GM12878 (cell line): ENCODE measurements at regions of chr9 and their contacts with region 1.

Region 1: DNA sequence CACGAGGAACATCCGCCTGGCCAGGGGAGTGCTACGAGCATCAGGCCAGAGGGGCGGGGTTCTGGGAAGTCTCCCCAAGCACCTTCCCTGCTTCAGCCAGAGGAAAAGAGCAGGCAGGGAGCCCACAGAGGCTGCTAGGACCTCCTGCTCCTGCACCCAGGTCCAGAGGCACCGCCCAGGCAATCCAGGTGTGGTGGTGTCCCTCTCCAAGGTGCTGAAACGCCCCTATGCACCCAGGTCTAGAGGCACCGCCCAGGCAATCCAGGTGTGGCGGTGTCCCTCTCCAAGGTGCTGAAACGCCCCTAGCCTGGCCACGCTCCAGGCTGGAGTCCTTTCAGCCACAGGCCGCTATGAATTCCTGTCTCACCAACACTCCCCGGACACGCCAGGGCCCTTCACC is 10.7 kb upstream of the UBAC1 start:
- DNase-seq: no peak
- ATAC-seq: peak; percentile 62
- H3K4me3 ChIP-seq: no peak overlapping the region
- H3K27ac ChIP-seq: no peak overlapping the region
- H3K4me1 ChIP-seq: no peaks in the 10 kb centered on the region
- H3K27me3 ChIP-seq: no peaks in the 10 kb centered on the region
- CTCF ChIP-seq: no peak
- EP300 ChIP-seq: no peak
- POLR2A ChIP-seq: no peak
- RAD21 ChIP-seq: no peak

Region 2: DNA sequence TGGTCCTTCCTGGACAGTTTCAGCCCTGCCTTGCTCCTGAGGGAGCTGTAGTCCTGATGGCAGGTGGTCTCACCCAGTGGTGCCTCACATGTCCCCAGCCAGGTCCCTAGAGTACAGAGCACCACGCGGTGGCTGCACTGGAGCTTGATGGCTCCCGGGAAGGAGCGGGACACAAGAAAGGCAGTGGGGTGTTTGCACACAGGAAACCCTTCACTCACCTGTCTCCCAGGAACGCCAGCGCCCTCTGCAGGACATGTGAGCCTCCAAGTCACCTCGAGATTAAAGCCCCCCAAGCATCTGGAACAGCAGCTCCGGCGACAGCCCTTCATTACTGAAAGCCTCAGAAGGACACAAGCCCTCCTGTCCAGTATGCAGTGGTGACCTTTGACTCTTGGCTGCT is 166.7 kb after region 1 on chr9:
- CTCF ChIA-PET with region 1: interaction called, 11 read pairs
- POLR2A ChIA-PET with region 1: no interaction called
- RAD21 ChIA-PET with region 1: interaction called, 3 read pairs
- SMC1A ChIA-PET with region 1: no interaction called
- in situ Hi-C with region 1: no loop called
- intact Hi-C with region 1: no loop called
- DNase-seq: no peak
- ATAC-seq: peak; percentile 46; the same call in 2 of the 3 replicates
- H3K4me3 ChIP-seq: no peak overlapping the region
- H3K27ac ChIP-seq: no peak overlapping the region
- H3K4me1 ChIP-seq: no peaks in the 10 kb centered on the region
- H3K27me3 ChIP-seq: peaks cover 0 to 2% of the 10 kb centered on the region in 2 experiments; a peak in 2 of 4 replicates
- CTCF ChIP-seq: peak; percentile 43 to 53 (median 49)
- EP300 ChIP-seq: no peak
- POLR2A ChIP-seq: no peak
- RAD21 ChIP-seq: no peak